CD8-positive, alpha-beta memory T cell (primary cell): ENCODE measurements at regions of chr3 and their contacts with region 1.

Region 1: DNA sequence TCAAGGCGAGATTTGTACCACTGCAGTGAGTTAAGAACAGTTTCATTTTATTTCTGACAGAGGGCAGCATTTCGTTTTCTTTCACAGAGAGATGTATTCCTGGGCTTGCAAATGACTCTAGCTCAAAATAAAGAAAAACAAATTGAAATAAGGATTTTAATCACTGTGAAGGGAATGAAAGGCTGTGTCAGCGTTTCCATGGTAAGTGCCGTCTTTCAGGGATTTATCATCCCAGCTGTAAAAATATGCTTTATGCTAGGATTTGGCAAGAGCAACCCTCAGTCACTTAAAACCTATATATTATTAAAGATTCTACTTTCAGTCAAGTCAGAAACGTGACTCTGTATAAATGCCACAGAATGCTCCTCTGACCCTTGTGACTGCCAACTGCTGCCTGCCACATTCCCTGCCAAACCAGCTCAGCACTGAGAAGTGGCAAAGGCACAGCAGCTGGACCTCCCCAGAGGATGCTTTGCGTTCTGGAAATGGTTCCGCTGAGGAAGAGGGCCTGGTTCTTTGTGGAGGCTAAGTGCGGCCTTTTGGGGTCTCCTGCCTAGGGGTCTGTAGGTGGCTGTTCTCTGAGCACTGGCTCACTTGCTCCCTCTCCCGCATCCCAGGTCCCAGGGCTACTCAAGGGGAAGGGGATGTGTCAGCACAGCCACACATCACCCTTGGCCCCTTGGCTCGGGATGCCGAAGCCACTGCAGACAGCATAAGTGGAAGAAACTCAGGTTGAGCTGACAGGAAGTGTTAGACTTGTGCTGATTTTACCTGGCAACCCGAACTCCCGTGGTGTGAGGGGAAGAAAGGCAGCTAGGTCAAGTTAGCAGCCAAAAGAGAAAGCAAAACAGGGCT is 56.6 kb upstream of the POMGNT2 start:
- DNase-seq: peak; percentile 30 to 76 (median 67)
- H3K4me3 ChIP-seq: peak overlapping the region; percentile 37
- H3K4me3 Mint-ChIP-seq: peak overlapping the region; percentile 17 to 88 (median 84)
- H3K27ac ChIP-seq: peak overlapping the region; percentile 32
- H3K27ac Mint-ChIP-seq: peak overlapping the region; percentile 96 to 100 (median 98)
- H3K4me1 ChIP-seq: peaks cover 26% of the 10 kb centered on the region
- H3K4me1 Mint-ChIP-seq: peaks cover 26 to 31% (median 30%) of the 10 kb centered on the region in 3 donors
- H3K27me3 ChIP-seq: no peaks in the 10 kb centered on the region
- H3K27me3 Mint-ChIP-seq: no peaks in the 10 kb centered on the region

Region 2: DNA sequence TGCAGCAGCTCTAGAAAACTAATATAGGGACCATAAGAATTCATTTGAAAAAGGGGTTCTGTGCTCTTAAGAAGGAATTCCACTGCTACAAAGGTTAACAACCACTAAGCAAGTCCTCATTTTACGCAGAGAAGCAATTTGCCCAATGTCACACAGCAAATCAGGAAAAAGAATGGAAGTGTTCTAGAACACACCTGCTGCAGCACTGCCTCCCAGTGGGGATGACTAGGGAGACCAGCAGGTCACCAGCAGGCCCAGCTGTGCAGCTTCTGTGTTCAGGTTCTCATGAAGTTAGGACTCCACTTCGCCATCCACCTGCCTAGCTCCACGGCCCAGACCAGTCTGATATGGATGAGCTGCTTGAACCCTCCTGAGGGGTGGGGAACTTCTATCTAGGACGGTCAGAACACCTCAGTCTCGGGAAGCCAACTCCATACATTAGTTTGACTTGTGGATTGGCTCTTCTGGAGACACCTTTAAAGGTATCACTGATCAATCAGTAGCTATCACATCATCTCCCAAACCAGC is 75.1 kb before region 1 on chr3:
- CTCF ChIA-PET with region 1: no interaction called
- POLR2A ChIA-PET with region 1: no interaction called
- DNase-seq: no peak
- H3K4me3 ChIP-seq: no peak overlapping the region
- H3K4me3 Mint-ChIP-seq: no peak overlapping the region
- H3K27ac ChIP-seq: no peak overlapping the region
- H3K27ac Mint-ChIP-seq: peak overlapping the region in 1 of 8 donors; percentile 84
- H3K4me1 ChIP-seq: no peaks in the 10 kb centered on the region
- H3K4me1 Mint-ChIP-seq: peaks cover 0 to 9% (median 0%) of the 10 kb centered on the region in 3 donors
- H3K27me3 ChIP-seq: no peaks in the 10 kb centered on the region
- H3K27me3 Mint-ChIP-seq: no peaks in the 10 kb centered on the region

Region 3: GRCh38 chr3:43194490-43195114 is 32.1 kb after region 1 on chr3:
- CTCF ChIA-PET with region 1: interaction called, 13 read pairs
- POLR2A ChIA-PET with region 1: interaction called, 3 read pairs
- DNase-seq: peak in 3 of 5 donors; percentile 31 to 59 (median 59)
- H3K4me3 ChIP-seq: peak overlapping the region; percentile 8
- H3K4me3 Mint-ChIP-seq: peak overlapping the region in 6 of 7 donors; percentile 41 to 67 (median 58)
- H3K27ac ChIP-seq: peak overlapping the region; percentile 29
- H3K27ac Mint-ChIP-seq: peak overlapping the region; percentile 75 to 97 (median 92)
- H3K4me1 ChIP-seq: peaks cover 75% of the 10 kb centered on the region
- H3K4me1 Mint-ChIP-seq: peaks cover 51 to 68% (median 66%) of the 10 kb centered on the region in 3 donors
- H3K27me3 ChIP-seq: no peaks in the 10 kb centered on the region
- H3K27me3 Mint-ChIP-seq: peaks cover 1 to 3% of the 10 kb centered on the region in 2 donors

Region 4: GRCh38 chr3:43286115-43286840 is 123.8 kb after region 1 on chr3 and contains the start of gene SNRK:
- CTCF ChIA-PET with region 1: interaction called, 12 read pairs
- POLR2A ChIA-PET with region 1: interaction called, 3 read pairs
- DNase-seq: peak; percentile 89 to 94 (median 90)
- H3K4me3 ChIP-seq: peak within 1 kb of the TSS; percentile 94
- H3K4me3 Mint-ChIP-seq: peak within 1 kb of the TSS; percentile 98 to 100 (median 99)
- H3K27ac ChIP-seq: peak within 1 kb of the TSS; percentile 82
- H3K27ac Mint-ChIP-seq: peak within 1 kb of the TSS; percentile 99 to 100 (median 100)
- H3K4me1 ChIP-seq: peaks cover 32% of the 10 kb centered on the region
- H3K4me1 Mint-ChIP-seq: peaks cover 32 to 38% (median 36%) of the 10 kb centered on the region in 3 donors
- H3K27me3 ChIP-seq: no peaks in the 10 kb centered on the region
- H3K27me3 Mint-ChIP-seq: peaks cover 0 to 1% of the 10 kb centered on the region in 2 donors
- total RNA-seq, gene SNRK: 34.2 to 35.9 TPM

Region 5: DNA sequence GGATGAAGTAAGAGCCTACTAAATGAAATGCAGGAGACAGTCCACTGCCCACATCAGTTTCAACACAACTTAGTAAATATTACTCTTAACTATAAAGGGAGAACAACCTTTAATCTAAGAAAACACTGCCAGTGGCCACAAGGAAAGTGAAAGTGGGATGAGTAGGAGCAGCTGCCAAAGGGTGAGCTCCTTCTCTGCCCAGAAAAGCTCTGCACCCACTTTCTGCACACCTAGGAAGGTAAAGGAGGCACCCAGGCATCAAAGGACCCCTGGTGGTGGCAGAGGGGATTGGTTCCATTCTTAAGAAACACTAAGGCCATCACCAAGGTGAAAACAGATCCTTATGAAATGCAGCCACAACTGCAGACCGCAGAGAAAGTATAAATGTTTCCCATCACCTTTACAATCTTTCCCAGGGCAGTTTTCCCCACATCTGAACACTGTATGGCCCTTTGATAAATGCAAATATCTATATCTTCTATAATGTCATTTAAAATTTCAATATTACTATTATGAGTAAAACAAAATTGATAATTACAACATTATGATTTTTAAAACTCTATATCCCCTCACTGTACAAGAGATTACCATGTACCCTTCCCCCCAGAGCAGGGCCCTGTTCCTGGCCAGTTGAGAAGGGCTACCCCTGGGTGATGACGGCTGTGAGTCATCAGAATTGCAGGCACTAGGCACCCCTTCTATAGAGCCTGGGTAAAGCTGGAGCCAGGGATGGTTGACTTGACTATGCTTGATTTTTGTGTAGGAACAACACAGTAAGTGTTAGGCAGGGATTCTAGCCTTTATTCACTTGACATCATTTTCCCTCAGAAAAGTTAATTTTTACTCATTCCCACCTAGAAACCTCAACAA is 215.8 kb after region 1 on chr3:
- CTCF ChIA-PET with region 1: interaction called, 34 read pairs
- POLR2A ChIA-PET with region 1: interaction called, 3 read pairs
- DNase-seq: peak; percentile 47 to 82 (median 62)
- H3K4me3 ChIP-seq: no peak overlapping the region
- H3K4me3 Mint-ChIP-seq: peak overlapping the region in 3 of 7 donors; percentile 2 to 45 (median 20)
- H3K27ac ChIP-seq: no peak overlapping the region
- H3K27ac Mint-ChIP-seq: peak overlapping the region; percentile 3 to 85 (median 62)
- H3K4me1 ChIP-seq: peaks cover 8% of the 10 kb centered on the region
- H3K4me1 Mint-ChIP-seq: peaks cover 18 to 33% (median 25%) of the 10 kb centered on the region in 3 donors
- H3K27me3 ChIP-seq: no peaks in the 10 kb centered on the region
- H3K27me3 Mint-ChIP-seq: peaks cover 0 to 1% of the 10 kb centered on the region in 2 donors

Region 6: DNA sequence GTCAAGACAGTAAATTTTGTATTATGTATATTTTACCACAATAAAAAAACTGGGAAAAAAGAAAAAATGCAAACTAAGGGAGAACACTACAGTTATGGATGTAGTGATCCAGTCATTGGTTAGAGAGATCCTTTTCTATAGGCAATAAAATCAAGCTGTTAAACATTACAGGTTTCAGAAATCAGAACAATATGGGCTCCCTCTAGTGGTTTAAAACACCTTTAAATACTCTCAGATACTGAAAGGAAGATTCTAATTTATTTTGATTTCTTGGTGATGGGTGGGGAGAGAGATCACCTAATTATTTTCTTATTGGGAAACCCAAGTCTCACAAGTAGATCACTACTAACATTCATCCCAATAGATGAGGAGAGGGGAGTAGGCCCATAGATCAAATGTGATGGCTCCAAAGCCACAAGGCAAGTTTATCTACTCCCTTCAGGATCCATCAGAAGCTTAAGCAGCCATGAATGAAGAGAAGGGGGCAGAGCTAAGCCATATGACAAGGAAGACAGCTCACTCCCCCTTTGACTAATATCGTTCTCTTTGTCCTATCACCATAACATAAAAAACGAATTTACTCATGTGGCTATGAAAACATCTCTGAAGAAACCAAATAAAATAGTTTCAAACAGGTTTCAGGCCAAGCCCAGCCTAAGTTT is 340.7 kb after region 1 on chr3:
- CTCF ChIA-PET with region 1: interaction called, 41 read pairs
- POLR2A ChIA-PET with region 1: interaction called, 3 read pairs
- DNase-seq: peak in 2 of 5 donors; percentile 46 to 53
- H3K4me3 ChIP-seq: no peak overlapping the region
- H3K4me3 Mint-ChIP-seq: no peak overlapping the region
- H3K27ac ChIP-seq: no peak overlapping the region
- H3K27ac Mint-ChIP-seq: peak overlapping the region in 5 of 8 donors; percentile 12 to 86 (median 54)
- H3K4me1 ChIP-seq: peaks cover 36% of the 10 kb centered on the region
- H3K4me1 Mint-ChIP-seq: peaks cover 45 to 49% (median 49%) of the 10 kb centered on the region in 3 donors
- H3K27me3 ChIP-seq: no peaks in the 10 kb centered on the region
- H3K27me3 Mint-ChIP-seq: no peaks in the 10 kb centered on the region